ENCODE measurements at regions of chr7 and their contacts with region 1.

Region 1: DNA sequence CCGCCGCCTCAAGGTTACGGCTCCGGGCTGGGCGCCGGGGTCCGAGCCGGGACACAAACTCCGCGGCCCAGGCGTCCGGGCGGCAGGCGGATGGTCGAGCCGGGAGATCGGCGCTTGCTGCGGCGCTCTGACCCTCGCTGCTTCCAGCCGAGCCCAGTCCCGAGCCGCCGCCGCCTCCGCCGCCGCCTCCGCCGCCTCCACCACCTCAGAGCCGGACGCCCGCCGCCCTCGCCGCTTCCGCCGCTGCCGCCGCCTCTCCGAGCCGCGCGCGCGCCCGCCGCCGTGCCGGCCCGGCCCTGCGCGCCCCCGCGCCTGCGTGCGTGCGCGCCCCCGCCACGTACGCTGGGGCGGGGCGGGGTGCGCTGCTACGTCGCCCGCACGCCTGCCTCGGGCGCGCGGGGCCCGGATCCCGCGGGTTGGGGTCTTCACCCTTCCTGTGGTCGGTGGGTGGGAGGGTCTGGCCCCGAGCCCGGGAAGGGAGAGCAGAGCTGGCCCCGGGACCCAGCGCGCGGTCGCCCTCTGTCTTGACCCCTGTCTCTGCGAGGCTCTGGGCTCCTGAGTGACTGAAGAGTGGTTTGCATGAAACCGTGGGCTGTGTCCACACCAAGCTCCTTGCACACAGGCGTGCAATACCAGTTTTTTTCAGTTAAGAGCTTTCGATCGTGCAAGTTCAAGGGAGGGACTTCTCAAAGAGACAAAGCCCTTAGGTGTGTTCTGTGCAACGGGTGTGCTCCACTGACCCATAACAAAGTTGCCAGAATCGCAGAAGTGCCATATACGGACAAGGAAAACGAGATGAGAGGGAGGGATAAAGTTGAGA is at the start of gene SMURF1:
- DNase-seq: peak; percentile 54
- H3K4me3 Mint-ChIP-seq: peak within 1 kb of the TSS; percentile 92
- H3K27ac Mint-ChIP-seq: peak within 1 kb of the TSS; percentile 76
- H3K4me1 Mint-ChIP-seq: peaks cover 28% of the 10 kb centered on the region
- H3K27me3 Mint-ChIP-seq: no peaks in the 10 kb centered on the region
- CTCF ChIP-seq: no peak
- total RNA-seq, gene SMURF1: 19.9 and 20.3 TPM in 2 replicates

Region 2: DNA sequence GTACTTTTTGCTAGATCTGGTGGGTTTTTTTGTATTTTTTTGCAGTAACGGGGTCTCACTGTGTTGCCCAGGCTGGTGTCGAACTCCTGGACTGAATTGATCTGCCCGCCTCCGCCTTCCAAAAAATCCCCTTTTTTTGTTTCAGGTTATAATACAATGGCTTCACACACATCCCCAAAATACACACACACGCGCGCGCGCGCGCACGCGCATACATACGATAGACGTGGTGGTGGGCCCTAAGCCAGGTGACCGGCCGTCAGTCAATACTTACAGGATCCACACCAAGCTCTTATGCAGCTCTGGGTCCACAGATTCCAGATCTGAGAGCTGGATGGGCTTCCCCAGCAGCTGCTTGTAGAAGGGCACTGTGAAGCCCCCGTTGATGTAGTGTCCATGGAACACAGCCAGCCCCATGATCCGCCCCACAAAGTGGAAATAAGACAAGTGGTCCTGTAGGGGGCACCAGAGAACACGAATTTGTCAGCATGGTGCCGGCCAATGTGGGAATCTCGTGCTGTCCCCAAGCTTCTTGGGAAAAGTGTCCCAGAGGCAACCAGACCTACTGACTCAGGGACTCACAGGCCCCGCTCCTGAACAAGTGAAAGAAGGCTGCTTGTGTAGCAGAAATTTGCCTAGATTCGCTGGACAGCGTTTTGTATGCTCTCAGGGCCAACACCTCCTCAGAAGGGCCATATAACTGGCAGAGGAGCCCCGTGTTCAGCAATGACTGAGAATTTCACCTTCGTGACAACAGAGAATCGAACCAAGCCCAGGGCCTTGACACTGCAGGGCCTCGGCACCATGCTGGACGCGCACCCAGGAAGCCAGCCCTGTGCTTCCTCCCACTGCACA is 103.7 kb before region 1 on chr7:
- CTCF ChIA-PET with region 1: interaction called, 5 read pairs
- POLR2A ChIA-PET with region 1: interaction called, 3 read pairs
- intact Hi-C with region 1: loop called (anchors 1 kb)
- DNase-seq: peak; percentile 90
- H3K4me3 Mint-ChIP-seq: no peak overlapping the region
- H3K27ac Mint-ChIP-seq: peak overlapping the region; percentile 27
- H3K4me1 Mint-ChIP-seq: no peaks in the 10 kb centered on the region
- H3K27me3 Mint-ChIP-seq: no peaks in the 10 kb centered on the region
- CTCF ChIP-seq: peak; percentile 68

Region 3: GRCh38 chr7:99112097-99112496 is 32.0 kb before region 1 on chr7:
- CTCF ChIA-PET with region 1: no interaction called
- POLR2A ChIA-PET with region 1: interaction called, 13 read pairs
- intact Hi-C with region 1: no loop called
- DNase-seq: no peak
- H3K4me3 Mint-ChIP-seq: no peak overlapping the region
- H3K27ac Mint-ChIP-seq: peak overlapping the region; percentile 47
- H3K4me1 Mint-ChIP-seq: peaks cover 40% of the 10 kb centered on the region
- H3K27me3 Mint-ChIP-seq: no peaks in the 10 kb centered on the region
- CTCF ChIP-seq: no peak

Region 4: GRCh38 chr7:99200691-99201440 is 56.8 kb after region 1 on chr7:
- CTCF ChIA-PET with region 1: no interaction called
- POLR2A ChIA-PET with region 1: interaction called, 9 read pairs
- intact Hi-C with region 1: loop called (anchors 2 kb)
- DNase-seq: peak; percentile 86
- H3K4me3 Mint-ChIP-seq: peak overlapping the region; percentile 37
- H3K27ac Mint-ChIP-seq: peak overlapping the region; percentile 57
- H3K4me1 Mint-ChIP-seq: peaks cover 6% of the 10 kb centered on the region
- H3K27me3 Mint-ChIP-seq: no peaks in the 10 kb centered on the region
- CTCF ChIP-seq: no peak

Region 5: GRCh38 chr7:99312316-99313203 is 168.5 kb after region 1 on chr7:
- CTCF ChIA-PET with region 1: interaction called, 5 read pairs
- POLR2A ChIA-PET with region 1: interaction called, 3 read pairs
- intact Hi-C with region 1: loop called (anchors 2 kb)
- DNase-seq: peak; percentile 74
- H3K4me3 Mint-ChIP-seq: no peak overlapping the region
- H3K27ac Mint-ChIP-seq: no peak overlapping the region
- H3K4me1 Mint-ChIP-seq: peaks cover 7% of the 10 kb centered on the region
- H3K27me3 Mint-ChIP-seq: no peaks in the 10 kb centered on the region
- CTCF ChIP-seq: peak; percentile 92